WTC11 (cell line): ENCODE measurements at regions of chr20 and their contacts with region 1.

Region 1: GRCh38 chr20:40251284-40251932 is 437.6 kb downstream of the MAFB start:
- DNase-seq: peak; percentile 71
- ATAC-seq: peak; percentile 93
- H3K4me3 Mint-ChIP-seq: no peak overlapping the region
- H3K27ac Mint-ChIP-seq: no peak overlapping the region
- H3K4me1 Mint-ChIP-seq: peaks cover 15% of the 10 kb centered on the region
- H3K27me3 Mint-ChIP-seq: no peaks in the 10 kb centered on the region
- CTCF ChIP-seq: peak; percentile 68

Region 2: GRCh38 chr20:39829256-39829655 is 422.2 kb before region 1 on chr20:
- CTCF ChIA-PET with region 1: interaction called, 22 read pairs
- POLR2A ChIA-PET with region 1: no interaction called
- DNase-seq: peak; percentile 48
- ATAC-seq: peak; percentile 88
- H3K4me3 Mint-ChIP-seq: no peak overlapping the region
- H3K27ac Mint-ChIP-seq: no peak overlapping the region
- H3K4me1 Mint-ChIP-seq: peaks cover 18% of the 10 kb centered on the region
- H3K27me3 Mint-ChIP-seq: no peaks in the 10 kb centered on the region
- CTCF ChIP-seq: peak; percentile 25; the same call in 1 of the 2 replicates

Region 3: GRCh38 chr20:40160097-40160550 is 91.3 kb before region 1 on chr20:
- CTCF ChIA-PET with region 1: interaction called, 19 read pairs
- POLR2A ChIA-PET with region 1: no interaction called
- DNase-seq: peak; percentile 59
- ATAC-seq: peak; percentile 100
- H3K4me3 Mint-ChIP-seq: no peak overlapping the region
- H3K27ac Mint-ChIP-seq: no peak overlapping the region
- H3K4me1 Mint-ChIP-seq: peaks cover 2% of the 10 kb centered on the region; the same call in 1 of the 2 replicates
- H3K27me3 Mint-ChIP-seq: no peaks in the 10 kb centered on the region
- CTCF ChIP-seq: peak; percentile 48

Region 4: DNA sequence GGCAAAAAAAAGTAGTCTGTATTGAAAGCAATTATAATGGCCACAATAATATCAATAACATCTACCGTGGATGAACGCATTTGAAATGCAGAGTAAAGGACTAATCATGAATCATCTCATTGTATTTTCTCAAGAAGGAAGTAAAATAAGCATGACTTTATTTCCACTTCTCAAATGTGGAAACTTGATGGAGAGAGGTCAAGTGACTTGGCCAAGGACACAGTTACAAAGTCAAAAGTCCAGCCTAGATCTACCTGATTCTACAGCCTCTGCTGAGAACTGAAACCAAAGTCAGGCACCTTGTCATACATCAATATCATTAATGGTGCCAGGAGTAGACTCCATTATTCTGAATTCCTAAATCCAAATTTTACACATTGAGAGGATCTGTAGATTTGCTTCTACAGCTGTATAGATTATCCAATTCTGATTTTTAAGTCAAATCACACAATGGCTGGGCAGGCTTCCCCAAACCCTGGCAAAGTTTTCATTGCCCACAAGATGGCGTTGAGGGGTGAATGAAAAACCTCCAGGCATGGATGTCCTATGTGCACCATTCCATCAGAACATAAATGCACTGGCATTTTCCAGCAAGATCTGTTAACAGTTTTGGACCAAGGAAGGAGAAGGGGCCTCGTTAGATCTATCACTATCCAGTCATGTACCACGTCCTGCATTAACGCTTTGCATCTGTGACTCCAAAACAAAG is 14.6 kb after region 1 on chr20:
- CTCF ChIA-PET with region 1: interaction called, 27 read pairs
- POLR2A ChIA-PET with region 1: interaction called, 3 read pairs
- DNase-seq: peak; percentile 36
- ATAC-seq: peak; percentile 30
- H3K4me3 Mint-ChIP-seq: no peak overlapping the region
- H3K27ac Mint-ChIP-seq: no peak overlapping the region
- H3K4me1 Mint-ChIP-seq: peaks cover 68% of the 10 kb centered on the region
- H3K27me3 Mint-ChIP-seq: no peaks in the 10 kb centered on the region
- CTCF ChIP-seq: no peak